ENCODE measurements at regions of chr5 and their contacts with region 1.

Region 1: GRCh38 chr5:18393589-18394442 is 759.6 kb downstream of the TAF11L14 start:
- DNase-seq: peak; percentile 65
- H3K4me3 ChIP-seq: no peak overlapping the region
- H3K27ac ChIP-seq: no peak overlapping the region
- H3K4me1 ChIP-seq: no peaks in the 10 kb centered on the region
- H3K27me3 ChIP-seq: no peaks in the 10 kb centered on the region
- CTCF ChIP-seq: peak; percentile 81 to 89

Region 2: DNA sequence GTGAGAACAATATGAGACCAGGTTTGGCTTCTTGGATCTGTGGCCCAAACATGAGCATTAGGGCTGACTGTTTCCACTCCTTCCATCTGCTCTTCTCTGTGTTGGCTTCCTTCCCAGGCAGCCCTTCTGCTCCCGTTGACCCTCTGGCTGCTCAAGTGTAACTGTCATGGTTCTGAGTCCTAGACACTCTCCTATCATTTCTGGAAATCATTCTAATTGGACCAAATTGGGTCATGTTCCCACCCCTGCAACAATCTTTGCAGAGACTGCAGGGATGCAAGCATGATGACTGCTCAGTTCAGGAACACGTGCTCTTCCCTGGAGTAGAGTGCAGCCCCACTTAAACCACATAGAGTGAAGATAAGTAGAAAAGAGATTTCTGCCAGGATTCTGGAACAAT is 18.2 kb before region 1 on chr5:
- CTCF ChIA-PET with region 1: no interaction called
- dilution Hi-C with region 1: no loop called
- in situ Hi-C with region 1: no loop called
- intact Hi-C with region 1: no loop called
- DNase-seq: no peak
- H3K4me3 ChIP-seq: no peak overlapping the region
- H3K27ac ChIP-seq: no peak overlapping the region
- H3K4me1 ChIP-seq: no peaks in the 10 kb centered on the region
- H3K27me3 ChIP-seq: no peaks in the 10 kb centered on the region
- CTCF ChIP-seq: no peak

Region 3: GRCh38 chr5:18465833-18466591 is 72.2 kb after region 1 on chr5:
- CTCF ChIA-PET with region 1: no interaction called
- dilution Hi-C with region 1: no loop called
- in situ Hi-C with region 1: no loop called
- intact Hi-C with region 1: loop called (anchors 2 kb)
- DNase-seq: peak; percentile 51
- H3K4me3 ChIP-seq: no peak overlapping the region
- H3K27ac ChIP-seq: no peak overlapping the region
- H3K4me1 ChIP-seq: no peaks in the 10 kb centered on the region
- H3K27me3 ChIP-seq: no peaks in the 10 kb centered on the region
- CTCF ChIP-seq: peak; percentile 81 to 87